ENCODE measurements at regions of chr2 and their contacts with region 1.

Region 1: GRCh38 chr2:204108330-204108751 is 171.8 kb downstream of the ICOS start:
- DNase-seq: peak; percentile 42 to 72 (median 66)
- ATAC-seq: peak; percentile 81
- H3K4me3 ChIP-seq: no peak overlapping the region
- H3K27ac ChIP-seq: no peak overlapping the region
- H3K4me1 ChIP-seq: no peaks in the 10 kb centered on the region
- H3K27me3 ChIP-seq: peaks cover 0 to 11% of the 10 kb centered on the region in 2 experiments; a peak in 2 of 5 replicates
- CTCF ChIP-seq: peak; percentile 32 to 37 (median 36); a peak in 3 of 6 replicates
- EP300 ChIP-seq: no peak
- POLR2A ChIP-seq: no peak
- RAD21 ChIP-seq: peak in 1 of 2 experiments; percentile 33; a peak in 2 of 4 replicates

Region 2: GRCh38 chr2:204086167-204086566 is 22.2 kb before region 1 on chr2:
- CTCF ChIA-PET with region 1: no interaction called
- POLR2A ChIA-PET with region 1: no interaction called
- in situ Hi-C with region 1: no loop called
- intact Hi-C with region 1: no loop called
- DNase-seq: no peak
- ATAC-seq: no peak
- H3K4me3 ChIP-seq: no peak overlapping the region
- H3K27ac ChIP-seq: no peak overlapping the region
- H3K4me1 ChIP-seq: no peaks in the 10 kb centered on the region
- H3K27me3 ChIP-seq: no peaks in the 10 kb centered on the region; a peak in 1 of 5 replicates
- CTCF ChIP-seq: no peak
- EP300 ChIP-seq: no peak
- POLR2A ChIP-seq: no peak
- RAD21 ChIP-seq: no peak

Region 3: GRCh38 chr2:204177977-204178540 is 69.7 kb after region 1 on chr2:
- CTCF ChIA-PET with region 1: no interaction called
- POLR2A ChIA-PET with region 1: no interaction called
- in situ Hi-C with region 1: no loop called
- intact Hi-C with region 1: loop called (anchors 2 kb)
- DNase-seq: peak; percentile 16 to 35 (median 22)
- ATAC-seq: peak; percentile 80
- H3K4me3 ChIP-seq: no peak overlapping the region
- H3K27ac ChIP-seq: no peak overlapping the region
- H3K4me1 ChIP-seq: no peaks in the 10 kb centered on the region
- H3K27me3 ChIP-seq: no peaks in the 10 kb centered on the region
- CTCF ChIP-seq: peak; percentile 44 to 54 (median 48); a peak in 5 of 6 replicates
- EP300 ChIP-seq: no peak
- POLR2A ChIP-seq: no peak
- RAD21 ChIP-seq: peak in 1 of 2 experiments; percentile 48; a peak in 3 of 4 replicates